CD8-positive, alpha-beta memory T cell (primary cell): ENCODE measurements at regions of chr19 and their contacts with region 1.

Region 1: GRCh38 chr19:49929611-49930482 is 543 bp upstream of the NUP62 start:
- DNase-seq: peak; percentile 82 to 96 (median 94)
- H3K4me3 ChIP-seq: peak overlapping the region; percentile 96
- H3K4me3 Mint-ChIP-seq: peak overlapping the region; percentile 92 to 99 (median 98)
- H3K27ac ChIP-seq: peak overlapping the region; percentile 82
- H3K27ac Mint-ChIP-seq: peak overlapping the region; percentile 88 to 99 (median 97)
- H3K4me1 ChIP-seq: peaks cover 46% of the 10 kb centered on the region
- H3K4me1 Mint-ChIP-seq: peaks cover 61 to 73% (median 72%) of the 10 kb centered on the region in 3 donors
- H3K27me3 ChIP-seq: no peaks in the 10 kb centered on the region
- H3K27me3 Mint-ChIP-seq: peaks cover 0 to 7% of the 10 kb centered on the region in 2 donors

Region 2: DNA sequence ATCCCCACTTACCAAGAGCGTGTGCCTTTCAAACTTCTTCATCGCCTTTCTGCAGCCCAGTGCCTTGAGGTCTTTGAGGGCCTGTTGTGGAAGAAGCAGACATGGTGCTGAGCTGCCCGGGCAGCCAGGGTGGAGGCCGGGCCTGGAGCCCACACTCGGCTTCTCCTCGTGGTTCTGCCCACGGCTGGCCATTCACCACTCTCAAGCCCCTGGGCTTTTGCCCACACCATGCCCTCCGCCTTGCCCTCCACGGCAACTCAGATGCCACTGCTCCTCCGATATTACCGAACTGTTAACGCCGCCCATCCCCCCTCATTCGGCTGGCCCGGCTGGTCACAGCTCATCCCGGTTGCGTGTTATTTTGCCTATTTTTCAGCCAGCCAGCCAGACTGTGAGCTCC is 38.5 kb before region 1 on chr19:
- CTCF ChIA-PET with region 1: interaction called, 4 read pairs
- POLR2A ChIA-PET with region 1: interaction called, 11 read pairs
- DNase-seq: no peak
- H3K4me3 ChIP-seq: no peak overlapping the region
- H3K4me3 Mint-ChIP-seq: peak overlapping the region in 5 of 7 donors; percentile 32 to 80 (median 41)
- H3K27ac ChIP-seq: no peak overlapping the region
- H3K27ac Mint-ChIP-seq: peak overlapping the region in 6 of 8 donors; percentile 51 to 94 (median 80)
- H3K4me1 ChIP-seq: peaks cover 10% of the 10 kb centered on the region
- H3K4me1 Mint-ChIP-seq: peaks cover 11 to 32% (median 21%) of the 10 kb centered on the region in 3 donors
- H3K27me3 ChIP-seq: no peaks in the 10 kb centered on the region
- H3K27me3 Mint-ChIP-seq: peaks cover 0 to 2% of the 10 kb centered on the region in 2 donors